BJ (cell line): ENCODE measurements at regions of chr16 and their contacts with region 1.

Region 1: GRCh38 chr16:74862741-74863244 is 88.2 kb upstream of the FA2H start:
- DNase-seq: no peak
- H3K4me3 ChIP-seq: no peak overlapping the region
- H3K27me3 ChIP-seq: no peaks in the 10 kb centered on the region; the same call in 1 of the 2 replicates
- CTCF ChIP-seq: peak; percentile 74

Region 2: GRCh38 chr16:74709441-74709877 is 153.3 kb before region 1 on chr16:
- CTCF ChIA-PET with region 1: interaction called, 93 read pairs
- POLR2A ChIA-PET with region 1: no interaction called
- DNase-seq: peak; percentile 15
- H3K4me3 ChIP-seq: no peak overlapping the region
- H3K27me3 ChIP-seq: peaks cover 5% of the 10 kb centered on the region; the same call in 1 of the 2 replicates
- CTCF ChIP-seq: peak; percentile 97

Region 3: GRCh38 chr16:74724820-74725549 is 137.8 kb before region 1 on chr16:
- CTCF ChIA-PET with region 1: interaction called, 14 read pairs
- POLR2A ChIA-PET with region 1: no interaction called
- DNase-seq: peak; percentile 9
- H3K4me3 ChIP-seq: no peak overlapping the region
- H3K27me3 ChIP-seq: no peaks in the 10 kb centered on the region; the same call in 1 of the 2 replicates
- CTCF ChIP-seq: peak; percentile 41

Region 4: GRCh38 chr16:74813109-74813641 is 49.6 kb before region 1 on chr16:
- CTCF ChIA-PET with region 1: interaction called, 56 read pairs
- POLR2A ChIA-PET with region 1: no interaction called
- DNase-seq: no peak
- H3K4me3 ChIP-seq: no peak overlapping the region
- H3K27me3 ChIP-seq: peaks cover 3% of the 10 kb centered on the region
- CTCF ChIP-seq: peak; percentile 99

Region 5: GRCh38 chr16:74825941-74826542 is 36.8 kb before region 1 on chr16:
- CTCF ChIA-PET with region 1: interaction called, 11 read pairs
- POLR2A ChIA-PET with region 1: no interaction called
- DNase-seq: no peak
- H3K4me3 ChIP-seq: no peak overlapping the region
- H3K27me3 ChIP-seq: peaks cover 3% of the 10 kb centered on the region; the same call in 1 of the 2 replicates
- CTCF ChIP-seq: no peak

Region 6: DNA sequence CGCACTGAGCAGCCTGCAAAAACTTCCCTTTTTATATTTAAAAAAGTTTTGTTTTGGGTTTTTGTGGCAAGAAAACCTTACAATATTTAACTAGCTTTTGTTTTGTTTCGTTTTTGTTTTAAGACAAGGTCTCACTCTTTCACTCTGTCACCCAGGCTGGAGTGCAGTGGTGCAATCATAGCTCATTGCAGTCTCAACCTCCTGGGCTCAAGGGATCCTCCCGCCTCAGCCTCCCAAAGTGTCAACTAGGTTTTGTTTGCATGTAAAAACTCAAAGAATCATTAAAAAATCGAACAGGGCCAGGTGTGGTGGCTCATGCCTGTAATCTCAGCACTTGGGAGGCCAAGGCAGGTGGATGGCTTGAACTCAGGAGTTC is 10.3 kb before region 1 on chr16:
- CTCF ChIA-PET with region 1: interaction called, 28 read pairs
- POLR2A ChIA-PET with region 1: no interaction called
- DNase-seq: no peak
- H3K4me3 ChIP-seq: no peak overlapping the region
- H3K27me3 ChIP-seq: no peaks in the 10 kb centered on the region
- CTCF ChIP-seq: no peak

Region 7: GRCh38 chr16:75110637-75111513 is 248.1 kb after region 1 on chr16:
- CTCF ChIA-PET with region 1: interaction called, 13 read pairs
- POLR2A ChIA-PET with region 1: no interaction called
- DNase-seq: peak; percentile 29
- H3K4me3 ChIP-seq: 0 out of 2 replicates have a peak overlapping the region, but pooled peaks have one; percentile 13
- H3K27me3 ChIP-seq: no peaks in the 10 kb centered on the region
- CTCF ChIP-seq: peak; percentile 94